GM18951 (cell line): ENCODE measurements at regions of chr5 and their contacts with region 1.

Region 1: DNA sequence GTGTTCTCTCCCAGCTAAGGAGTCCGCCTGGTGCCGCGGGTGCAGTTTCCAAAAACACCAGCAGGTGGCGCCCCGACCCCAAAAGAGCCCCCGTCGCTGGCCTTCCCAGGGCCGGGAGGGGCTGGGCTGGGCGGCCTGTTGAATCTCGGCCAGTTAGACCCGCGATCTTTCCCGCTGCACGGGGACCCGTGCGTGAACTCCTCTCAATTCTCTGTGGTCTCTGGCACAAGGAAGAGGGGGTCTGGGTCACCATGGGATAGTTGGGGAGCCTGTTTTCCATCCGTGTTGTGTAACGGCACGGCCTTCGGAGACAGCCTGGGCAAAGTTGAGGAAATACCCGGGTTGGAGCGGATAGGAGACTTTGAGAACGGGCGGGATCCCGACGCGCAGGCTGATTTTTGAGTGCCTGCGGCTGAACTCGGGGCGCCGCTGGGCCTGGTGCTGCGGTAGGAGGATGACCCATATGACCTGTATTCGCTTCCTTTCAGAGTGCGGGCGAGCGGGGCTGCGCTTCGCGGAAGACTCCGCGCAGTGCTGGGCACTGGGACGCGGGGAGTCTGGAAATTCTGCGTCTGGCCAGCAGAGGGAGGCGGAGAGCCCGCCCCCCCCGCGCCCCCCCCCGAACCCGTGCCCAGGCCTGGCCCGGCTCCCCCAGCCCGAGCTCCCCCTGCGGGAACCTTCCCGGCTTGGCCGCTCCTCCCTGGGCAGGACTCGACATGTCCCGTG is 7.9 kb upstream of the PSD2 start:
- POLR2A ChIP-seq: no peak

Region 2: DNA sequence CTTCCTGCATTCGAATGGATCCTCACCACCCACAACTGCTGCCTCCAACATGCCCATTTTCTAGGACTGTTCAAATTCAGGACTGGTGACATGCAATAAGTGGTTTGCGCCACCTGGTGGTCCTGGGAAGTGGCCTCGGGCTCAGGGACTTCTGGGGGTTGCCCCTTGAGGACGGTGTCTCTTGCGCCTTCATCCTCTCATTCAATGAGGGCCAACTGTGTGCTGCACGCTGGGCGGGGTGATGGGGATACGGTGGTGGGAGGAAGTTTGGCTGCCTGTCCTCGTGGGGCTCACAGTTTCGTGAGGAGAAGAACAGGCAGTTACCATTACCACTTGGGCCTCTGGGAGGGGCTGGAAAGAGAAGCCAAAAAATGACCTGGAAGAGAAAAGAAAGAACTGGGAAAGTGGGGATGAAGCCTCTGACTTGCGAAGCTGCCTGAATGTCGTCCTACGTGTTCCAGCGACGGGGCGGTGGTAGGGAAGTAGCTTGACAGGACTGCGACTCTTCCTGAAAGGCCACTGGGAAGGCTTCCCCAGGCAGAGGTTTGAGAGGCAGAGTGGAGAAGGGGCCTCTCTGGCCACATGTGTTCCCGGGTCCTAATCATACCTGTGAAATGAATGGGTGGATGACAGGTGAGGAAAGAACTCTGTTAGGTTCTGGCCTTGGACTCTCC is 56.9 kb after region 1 on chr5:
- in situ Hi-C with region 1: loop called (anchors 10 kb)
- POLR2A ChIP-seq: no peak

Region 3: GRCh38 chr5:139968547-139969261 is 181.0 kb after region 1 on chr5:
- in situ Hi-C with region 1: loop called (anchors 5 kb)
- POLR2A ChIP-seq: no peak

Region 4: DNA sequence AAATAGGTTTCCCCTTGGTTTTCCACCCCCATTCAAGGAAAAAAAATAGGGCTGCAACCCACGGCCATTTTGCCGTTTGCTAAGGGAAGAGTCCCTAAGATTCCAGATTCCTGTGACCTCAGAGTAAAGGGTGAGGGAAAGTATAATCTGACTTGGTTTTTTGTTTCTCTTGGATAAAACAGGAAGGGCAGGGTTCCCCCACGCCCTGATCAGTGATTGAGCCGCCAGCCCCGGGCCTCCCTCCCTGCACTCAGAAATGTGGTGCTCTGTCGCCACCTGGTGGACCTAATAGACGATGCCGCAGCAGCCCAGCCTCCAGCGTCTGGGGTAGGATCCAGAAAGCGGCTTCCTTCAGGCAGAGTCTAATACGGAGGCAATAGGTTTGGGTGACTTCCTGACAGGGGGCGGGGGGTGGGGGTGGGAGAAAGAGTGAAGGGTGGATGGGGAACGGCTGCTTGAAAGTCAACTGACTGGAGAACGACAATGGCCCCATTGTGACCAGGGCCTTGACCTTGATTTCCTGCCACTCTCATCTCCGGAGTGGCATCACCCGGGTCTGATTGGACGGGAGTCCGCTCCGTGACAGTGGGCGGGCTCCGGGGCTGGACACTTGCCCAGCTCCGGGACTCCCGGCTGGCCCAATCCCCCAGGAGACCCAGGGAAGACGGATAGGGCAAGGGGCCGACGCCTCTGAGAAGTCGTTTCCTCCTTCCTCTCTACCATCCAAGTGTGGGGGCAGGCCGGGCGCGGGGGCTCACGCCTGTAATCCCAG is 369.5 kb after region 1 on chr5:
- in situ Hi-C with region 1: loop called (anchors 25 kb)
- POLR2A ChIP-seq: no peak

Region 5: DNA sequence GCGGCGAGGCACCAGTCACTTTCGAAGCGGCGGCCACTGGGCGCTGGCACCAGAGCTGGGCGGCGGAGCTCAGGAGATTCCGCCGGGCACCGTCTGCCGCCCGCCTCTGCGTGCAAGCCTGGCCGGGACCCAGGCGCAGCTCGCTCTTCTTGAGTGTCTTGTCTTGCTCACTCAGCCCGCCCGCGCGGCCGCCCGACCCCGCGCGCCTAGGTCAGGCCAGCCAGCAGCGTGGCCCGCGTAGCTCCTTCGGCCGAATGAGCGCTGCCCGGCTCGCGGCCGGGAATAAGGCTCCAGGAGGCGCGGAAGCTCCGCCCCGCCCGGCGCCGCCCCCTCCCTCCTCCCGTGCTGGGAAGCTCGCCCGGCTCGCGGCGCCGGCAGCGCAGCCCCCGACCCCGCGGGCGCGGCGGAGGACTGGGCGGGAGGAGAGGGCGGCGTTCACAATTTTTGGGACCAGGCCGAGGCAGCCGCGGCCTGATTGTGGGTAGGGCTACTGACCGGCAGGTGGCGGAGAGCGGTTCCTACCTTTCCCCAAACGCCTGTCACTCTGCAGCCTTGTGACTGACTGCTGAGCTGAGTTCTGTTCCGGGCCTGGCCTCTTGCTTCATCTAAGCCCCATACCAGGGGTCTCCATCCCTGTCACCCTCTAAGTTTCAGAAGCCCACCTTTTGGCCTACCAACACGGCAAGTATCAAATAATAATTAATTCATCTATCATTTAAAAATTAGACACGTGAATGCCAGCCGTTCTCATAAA is 558.8 kb after region 1 on chr5 and contains the start of gene HBEGF:
- in situ Hi-C with region 1: no loop called
- POLR2A ChIP-seq: peak; percentile 66